ENCODE measurements at regions of chr9 and their contacts with region 1.

Region 1: GRCh38 chr9:114174876-114175771 is 19.8 kb downstream of the COL27A1 start:
- DNase-seq: no peak
- H3K4me3 ChIP-seq: no peak overlapping the region
- H3K27ac ChIP-seq: no peak overlapping the region
- H3K4me1 ChIP-seq: no peaks in the 10 kb centered on the region; a peak in 1 of 7 replicates
- H3K27me3 ChIP-seq: no peaks in the 10 kb centered on the region
- CTCF ChIP-seq: no peak
- EP300 ChIP-seq: no peak
- POLR2A ChIP-seq: no peak
- RAD21 ChIP-seq: no peak

Region 2: DNA sequence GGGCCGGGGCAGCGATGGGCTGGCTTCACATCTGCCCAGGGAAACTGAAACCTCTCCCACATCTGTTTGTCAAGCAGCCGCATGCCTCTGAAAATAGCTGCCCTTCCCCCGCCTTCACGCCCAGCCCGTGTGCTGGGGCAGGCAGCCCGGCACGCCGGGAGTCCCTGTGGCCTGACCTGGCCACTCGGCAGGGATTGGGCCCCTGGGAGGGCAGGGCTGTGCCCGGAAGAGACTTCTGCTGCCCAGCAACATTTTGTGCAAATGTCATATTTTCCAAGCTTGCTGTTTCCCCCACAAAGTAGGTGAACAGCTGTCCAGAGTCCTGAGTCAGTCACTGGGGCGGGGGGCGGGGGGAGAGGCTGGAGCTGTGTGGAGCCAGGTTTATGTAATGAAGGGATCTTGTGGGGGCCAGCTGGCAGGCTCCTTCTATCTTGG is 11.6 kb before region 1 on chr9:
- CTCF ChIA-PET with region 1: interaction called, 6 read pairs
- POLR2A ChIA-PET with region 1: interaction called, 11 read pairs
- DNase-seq: peak in 1 of 2 experiments; percentile 62
- H3K4me3 ChIP-seq: no peak overlapping the region
- H3K27ac ChIP-seq: no peak overlapping the region
- H3K4me1 ChIP-seq: peaks cover 5 to 8% (median 6%) of the 10 kb centered on the region in 4 experiments; a peak in 4 of 7 replicates
- H3K27me3 ChIP-seq: no peaks in the 10 kb centered on the region
- CTCF ChIP-seq: no peak
- EP300 ChIP-seq: no peak
- POLR2A ChIP-seq: no peak
- RAD21 ChIP-seq: no peak

Region 3: DNA sequence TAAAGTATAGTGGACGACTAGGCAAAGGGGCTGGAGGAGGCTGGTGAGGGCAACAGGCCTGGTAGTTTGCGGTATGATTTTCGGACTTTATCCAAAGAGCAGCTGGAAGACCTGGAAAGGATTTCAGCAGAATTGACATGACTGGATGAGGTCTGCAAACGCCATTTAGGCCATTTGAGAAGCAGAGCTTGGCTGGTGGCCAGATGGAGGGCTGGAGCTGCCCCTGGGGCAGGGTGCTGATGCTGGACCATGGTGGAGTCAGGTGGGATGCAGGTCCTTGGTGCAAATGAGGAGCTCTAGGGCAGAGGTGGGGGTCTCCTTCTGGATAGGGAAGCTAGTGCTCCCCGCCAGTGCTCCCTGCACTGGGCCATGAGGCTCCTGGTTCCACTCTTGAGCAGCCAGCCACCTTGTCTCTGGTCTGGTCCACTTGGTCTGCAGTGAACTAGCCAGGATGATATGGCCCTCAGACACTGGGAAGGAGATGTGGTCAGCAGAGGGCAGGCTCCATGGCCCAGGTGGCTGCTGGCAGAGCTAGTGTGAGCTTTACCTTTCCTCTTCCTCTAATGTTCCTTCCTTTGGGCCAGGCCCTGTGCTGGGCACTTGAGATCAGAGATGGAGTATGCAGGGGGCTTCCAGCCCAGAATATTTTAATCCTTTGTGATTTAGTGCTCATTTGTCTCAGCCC is 11.6 kb after region 1 on chr9:
- CTCF ChIA-PET with region 1: interaction called, 13 read pairs
- POLR2A ChIA-PET with region 1: no interaction called
- DNase-seq: no peak
- H3K4me3 ChIP-seq: no peak overlapping the region
- H3K27ac ChIP-seq: no peak overlapping the region
- H3K4me1 ChIP-seq: no peaks in the 10 kb centered on the region
- H3K27me3 ChIP-seq: no peaks in the 10 kb centered on the region
- CTCF ChIP-seq: peak in 1 of 3 experiments; percentile 5; a peak in 1 of 4 replicates
- EP300 ChIP-seq: no peak
- POLR2A ChIP-seq: no peak
- RAD21 ChIP-seq: no peak

Measured in H1 (cell line).